ENCODE measurements at regions of chr6 and their contacts with region 1.

Region 1: GRCh38 chr6:133553652-133554051 is 312.5 kb downstream of the EYA4 start:
- DNase-seq: peak; percentile 79
- ATAC-seq: peak; percentile 33; the same call in 1 of the 2 replicates
- H3K4me3 ChIP-seq: no peak overlapping the region
- H3K27ac ChIP-seq: no peak overlapping the region
- H3K4me1 ChIP-seq: peaks cover 12% of the 10 kb centered on the region
- H3K27me3 ChIP-seq: no peaks in the 10 kb centered on the region
- CTCF ChIP-seq: peak; percentile 83
- POLR2A ChIP-seq: no peak
- RAD21 ChIP-seq: peak; percentile 84

Region 2: DNA sequence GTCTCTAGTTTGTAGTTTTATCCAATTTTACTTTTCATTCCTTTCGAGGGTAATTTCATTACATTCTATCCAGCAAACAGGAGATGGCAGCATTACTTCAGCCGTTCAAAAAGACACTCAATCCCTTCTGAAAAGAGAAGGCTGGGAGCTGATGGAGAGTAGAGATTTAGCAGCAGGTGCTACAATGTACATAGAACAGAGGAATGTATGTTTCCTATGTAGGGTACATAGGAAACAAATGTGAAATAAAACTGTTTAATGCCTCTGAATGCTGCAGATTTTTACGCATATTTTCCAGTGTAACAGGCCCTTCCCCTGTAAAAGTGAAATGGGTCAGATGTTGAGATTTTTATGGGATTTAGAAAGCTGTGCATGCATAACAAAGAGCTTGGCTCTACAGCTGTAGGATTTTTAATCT is 723.3 kb before region 1 on chr6:
- CTCF ChIA-PET with region 1: interaction called, 14 read pairs
- POLR2A ChIA-PET with region 1: no interaction called
- dilution Hi-C with region 1: no loop called
- in situ Hi-C with region 1: loop called (anchors 5 kb)
- intact Hi-C with region 1: loop called (anchors 1 kb)
- DNase-seq: peak; percentile 59
- ATAC-seq: peak; percentile 85
- H3K4me3 ChIP-seq: no peak overlapping the region
- H3K27ac ChIP-seq: no peak overlapping the region
- H3K4me1 ChIP-seq: no peaks in the 10 kb centered on the region
- H3K27me3 ChIP-seq: no peaks in the 10 kb centered on the region
- CTCF ChIP-seq: peak; percentile 74
- POLR2A ChIP-seq: no peak
- RAD21 ChIP-seq: peak; percentile 93

Region 3: DNA sequence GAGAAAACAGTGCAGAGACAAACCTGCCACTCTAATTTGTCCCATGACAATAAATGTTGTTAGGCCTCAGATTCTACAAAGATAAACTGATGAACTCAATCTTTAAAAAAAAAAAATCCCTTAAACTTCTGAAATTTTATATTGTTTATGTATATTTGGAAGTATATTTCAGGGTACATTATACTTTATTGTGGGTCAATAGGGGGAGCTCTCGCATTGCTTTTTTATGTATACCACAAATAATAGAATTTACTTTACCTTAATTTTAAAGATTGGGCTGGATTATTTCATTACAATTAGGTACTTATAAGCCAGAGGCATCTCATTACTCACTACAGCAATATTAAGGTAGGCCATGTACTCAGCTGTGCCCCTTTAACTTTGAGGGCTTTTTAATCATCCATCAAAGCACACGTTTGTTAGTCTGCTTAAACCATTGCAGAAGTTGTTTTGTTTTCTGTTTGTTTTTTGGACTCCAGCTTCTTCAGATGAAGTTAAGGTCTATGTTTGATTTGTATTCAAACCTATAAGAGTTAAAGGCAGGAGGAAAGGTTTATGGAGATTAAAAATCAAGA is 368.8 kb before region 1 on chr6:
- CTCF ChIA-PET with region 1: no interaction called
- POLR2A ChIA-PET with region 1: no interaction called
- dilution Hi-C with region 1: no loop called
- in situ Hi-C with region 1: loop called (anchors 10 kb)
- intact Hi-C with region 1: loop called (anchors 2 kb)
- DNase-seq: peak; percentile 53
- ATAC-seq: peak; percentile 49; the same call in 1 of the 2 replicates
- H3K4me3 ChIP-seq: no peak overlapping the region
- H3K27ac ChIP-seq: no peak overlapping the region
- H3K4me1 ChIP-seq: 0 out of 2 replicates have a peak, but pooled peaks cover 2% of the 10 kb centered on the region
- H3K27me3 ChIP-seq: no peaks in the 10 kb centered on the region
- CTCF ChIP-seq: peak; percentile 70
- POLR2A ChIP-seq: no peak
- RAD21 ChIP-seq: peak; percentile 69

Region 4: GRCh38 chr6:133241086-133241900 is 312.4 kb before region 1 on chr6 and contains the start of gene EYA4:
- CTCF ChIA-PET with region 1: no interaction called
- POLR2A ChIA-PET with region 1: no interaction called
- dilution Hi-C with region 1: no loop called
- in situ Hi-C with region 1: no loop called
- intact Hi-C with region 1: loop called (anchors 1 kb)
- DNase-seq: peak; percentile 74
- ATAC-seq: peak; percentile 73
- H3K4me3 ChIP-seq: peak within 1 kb of the TSS; percentile 77
- H3K27ac ChIP-seq: peak within 1 kb of the TSS; percentile 97
- H3K4me1 ChIP-seq: peaks cover 3% of the 10 kb centered on the region
- H3K27me3 ChIP-seq: no peaks in the 10 kb centered on the region
- CTCF ChIP-seq: 0 out of 2 replicates have a peak, but pooled peaks have one; percentile 13
- POLR2A ChIP-seq: no peak
- RAD21 ChIP-seq: no peak
- total RNA-seq, gene EYA4: 11.1 and 11.9 TPM in 2 replicates

Region 5: GRCh38 chr6:133502441-133503259 is 51.0 kb before region 1 on chr6:
- CTCF ChIA-PET with region 1: no interaction called
- POLR2A ChIA-PET with region 1: no interaction called
- dilution Hi-C with region 1: no loop called
- in situ Hi-C with region 1: no loop called
- intact Hi-C with region 1: loop called (anchors 2 kb)
- DNase-seq: peak; percentile 94
- ATAC-seq: peak; percentile 93
- H3K4me3 ChIP-seq: no peak overlapping the region
- H3K27ac ChIP-seq: peak overlapping the region; percentile 29; the same call in 1 of the 2 replicates
- H3K4me1 ChIP-seq: peaks cover 4% of the 10 kb centered on the region
- H3K27me3 ChIP-seq: no peaks in the 10 kb centered on the region
- CTCF ChIP-seq: no peak
- POLR2A ChIP-seq: no peak
- RAD21 ChIP-seq: no peak

Measured in IMR-90 (cell line).